CD8-positive, alpha-beta T cell (primary cell): ENCODE measurements at regions of chr4 and their contacts with region 1.

Region 1: GRCh38 chr4:73208376-73208775 is 50.2 kb downstream of the ANKRD17 start:
- DNase-seq: no peak
- ATAC-seq: no peak
- H3K4me3 ChIP-seq: no peak overlapping the region
- H3K4me3 Mint-ChIP-seq: no peak overlapping the region
- H3K27ac ChIP-seq: no peak overlapping the region
- H3K27ac Mint-ChIP-seq: no peak overlapping the region
- H3K4me1 ChIP-seq: no peaks in the 10 kb centered on the region
- H3K4me1 Mint-ChIP-seq: peaks cover 49% of the 10 kb centered on the region
- H3K27me3 ChIP-seq: no peaks in the 10 kb centered on the region
- H3K27me3 Mint-ChIP-seq: no peaks in the 10 kb centered on the region
- CTCF ChIP-seq: no peak

Region 2: GRCh38 chr4:72679666-72680065 is 528.7 kb before region 1 on chr4:
- CTCF ChIA-PET with region 1: no interaction called
- POLR2A ChIA-PET with region 1: no interaction called
- intact Hi-C with region 1: no loop called
- DNase-seq: no peak
- ATAC-seq: no peak
- H3K4me3 ChIP-seq: no peak overlapping the region
- H3K4me3 Mint-ChIP-seq: no peak overlapping the region
- H3K27ac ChIP-seq: no peak overlapping the region
- H3K27ac Mint-ChIP-seq: no peak overlapping the region
- H3K4me1 ChIP-seq: no peaks in the 10 kb centered on the region
- H3K4me1 Mint-ChIP-seq: no peaks in the 10 kb centered on the region
- H3K27me3 ChIP-seq: no peaks in the 10 kb centered on the region
- H3K27me3 Mint-ChIP-seq: peaks cover 9% of the 10 kb centered on the region
- CTCF ChIP-seq: no peak

Region 3: DNA sequence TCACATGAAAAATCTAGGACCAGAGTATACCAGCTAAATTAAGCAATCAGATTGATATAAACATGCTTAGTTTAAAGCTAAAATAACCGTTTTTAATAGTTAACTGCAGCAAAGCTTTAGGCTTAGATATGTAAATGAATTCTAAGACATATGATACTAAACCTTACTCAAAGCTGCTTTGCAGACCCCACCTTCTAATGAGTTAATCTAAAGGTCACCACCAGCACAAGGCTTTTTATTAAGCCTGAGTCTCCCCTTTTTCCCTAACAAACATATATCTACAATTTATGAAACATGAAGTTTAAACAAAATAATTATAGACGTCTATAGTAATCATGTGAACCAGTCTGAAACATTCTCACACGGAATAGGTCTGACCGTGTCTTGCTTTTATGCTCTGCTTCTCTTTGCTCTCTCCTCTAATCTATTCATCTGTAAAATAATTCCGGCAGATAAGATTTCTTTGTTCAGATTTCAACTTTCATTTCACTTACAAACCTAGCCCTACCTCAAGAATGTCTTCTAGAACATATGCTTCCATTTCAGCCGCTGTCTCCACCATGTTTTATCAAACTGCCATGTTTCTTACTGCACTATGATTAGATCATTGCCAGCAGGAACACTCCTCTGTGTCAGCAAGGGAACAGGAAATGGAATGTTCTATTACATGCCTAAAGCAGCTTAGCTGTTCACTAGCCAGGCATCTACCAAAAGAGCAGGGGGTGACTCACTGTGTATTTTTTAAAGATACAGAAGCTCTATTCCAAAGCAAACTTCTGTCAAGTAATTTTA is 14.3 kb after region 1 on chr4:
- CTCF ChIA-PET with region 1: no interaction called
- POLR2A ChIA-PET with region 1: interaction called, 4 read pairs
- intact Hi-C with region 1: loop called in 1 of 2 experiments (anchors 2 kb)
- DNase-seq: peak; percentile 12 to 89 (median 52)
- ATAC-seq: peak; percentile 100
- H3K4me3 ChIP-seq: peak overlapping the region; percentile 50 to 59
- H3K4me3 Mint-ChIP-seq: no peak overlapping the region
- H3K27ac ChIP-seq: peak overlapping the region; percentile 71 to 86
- H3K27ac Mint-ChIP-seq: no peak overlapping the region
- H3K4me1 ChIP-seq: peaks cover 20% of the 10 kb centered on the region
- H3K4me1 Mint-ChIP-seq: peaks cover 41% of the 10 kb centered on the region
- H3K27me3 ChIP-seq: no peaks in the 10 kb centered on the region
- H3K27me3 Mint-ChIP-seq: no peaks in the 10 kb centered on the region
- CTCF ChIP-seq: no peak

Region 4: GRCh38 chr4:73299548-73300280 is 91.3 kb after region 1 on chr4:
- CTCF ChIA-PET with region 1: no interaction called
- POLR2A ChIA-PET with region 1: no interaction called
- intact Hi-C with region 1: no loop called
- DNase-seq: no peak
- ATAC-seq: no peak
- H3K4me3 ChIP-seq: no peak overlapping the region
- H3K4me3 Mint-ChIP-seq: no peak overlapping the region
- H3K27ac ChIP-seq: no peak overlapping the region
- H3K27ac Mint-ChIP-seq: no peak overlapping the region
- H3K4me1 ChIP-seq: no peaks in the 10 kb centered on the region
- H3K4me1 Mint-ChIP-seq: no peaks in the 10 kb centered on the region
- H3K27me3 ChIP-seq: no peaks in the 10 kb centered on the region
- H3K27me3 Mint-ChIP-seq: no peaks in the 10 kb centered on the region
- CTCF ChIP-seq: no peak